H1 (cell line): ENCODE measurements at regions of chr16 and their contacts with region 1.

Region 1: GRCh38 chr16:70380861-70381603 is 34.3 kb downstream of the DDX19A start:
- DNase-seq: peak; percentile 94 to 97
- H3K4me3 ChIP-seq: peak overlapping the region; percentile 75 to 94 (median 86)
- H3K27ac ChIP-seq: peak overlapping the region; percentile 79; the same call in 1 of the 2 replicates
- H3K4me1 ChIP-seq: peaks cover 0 to 3% (median 0%) of the 10 kb centered on the region in 4 experiments; a peak in 2 of 7 replicates
- H3K27me3 ChIP-seq: no peaks in the 10 kb centered on the region
- CTCF ChIP-seq: peak in 2 of 3 experiments; percentile 25 to 32; a peak in 3 of 4 replicates
- EP300 ChIP-seq: no peak
- POLR2A ChIP-seq: peak; percentile 91 to 96
- RAD21 ChIP-seq: peak in 1 of 2 experiments; percentile 20; a peak in 1 of 4 replicates

Region 2: DNA sequence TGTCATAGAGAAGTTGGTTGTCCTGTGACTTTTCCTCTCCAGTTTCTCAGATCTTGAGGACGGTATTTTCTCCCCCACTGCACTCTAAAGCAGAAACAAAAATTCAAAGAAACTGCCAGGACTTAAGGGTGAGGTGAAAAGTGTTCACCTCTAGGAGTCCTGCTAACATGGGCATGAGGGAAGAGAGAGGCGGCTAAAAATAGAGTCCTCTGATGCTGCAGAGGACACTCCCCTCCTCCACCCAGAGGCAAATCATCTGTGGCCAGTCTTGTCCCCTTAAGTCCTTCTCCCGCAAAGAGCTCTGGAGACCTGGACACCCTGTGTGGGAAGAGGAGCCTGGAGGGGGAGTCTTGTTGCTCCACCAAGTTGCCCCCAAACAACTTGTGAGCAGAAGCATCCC is 39.0 kb before region 1 on chr16:
- CTCF ChIA-PET with region 1: no interaction called
- POLR2A ChIA-PET with region 1: interaction called, 12 read pairs
- DNase-seq: no peak
- H3K4me3 ChIP-seq: no peak overlapping the region
- H3K27ac ChIP-seq: no peak overlapping the region; the same call in 1 of the 2 replicates
- H3K4me1 ChIP-seq: no peaks in the 10 kb centered on the region; a peak in 1 of 7 replicates
- H3K27me3 ChIP-seq: no peaks in the 10 kb centered on the region
- CTCF ChIP-seq: no peak
- EP300 ChIP-seq: no peak
- POLR2A ChIP-seq: no peak
- RAD21 ChIP-seq: no peak

Region 3: GRCh38 chr16:70395345-70395901 is 14.4 kb after region 1 on chr16:
- CTCF ChIA-PET with region 1: interaction called, 26 read pairs
- POLR2A ChIA-PET with region 1: interaction called, 37 read pairs
- DNase-seq: peak; percentile 57 to 95
- H3K4me3 ChIP-seq: no peak overlapping the region
- H3K27ac ChIP-seq: no peak overlapping the region
- H3K4me1 ChIP-seq: no peaks in the 10 kb centered on the region
- H3K27me3 ChIP-seq: no peaks in the 10 kb centered on the region
- CTCF ChIP-seq: peak; percentile 92 to 98 (median 93)
- EP300 ChIP-seq: no peak
- POLR2A ChIP-seq: no peak
- RAD21 ChIP-seq: peak; percentile 93

Region 4: DNA sequence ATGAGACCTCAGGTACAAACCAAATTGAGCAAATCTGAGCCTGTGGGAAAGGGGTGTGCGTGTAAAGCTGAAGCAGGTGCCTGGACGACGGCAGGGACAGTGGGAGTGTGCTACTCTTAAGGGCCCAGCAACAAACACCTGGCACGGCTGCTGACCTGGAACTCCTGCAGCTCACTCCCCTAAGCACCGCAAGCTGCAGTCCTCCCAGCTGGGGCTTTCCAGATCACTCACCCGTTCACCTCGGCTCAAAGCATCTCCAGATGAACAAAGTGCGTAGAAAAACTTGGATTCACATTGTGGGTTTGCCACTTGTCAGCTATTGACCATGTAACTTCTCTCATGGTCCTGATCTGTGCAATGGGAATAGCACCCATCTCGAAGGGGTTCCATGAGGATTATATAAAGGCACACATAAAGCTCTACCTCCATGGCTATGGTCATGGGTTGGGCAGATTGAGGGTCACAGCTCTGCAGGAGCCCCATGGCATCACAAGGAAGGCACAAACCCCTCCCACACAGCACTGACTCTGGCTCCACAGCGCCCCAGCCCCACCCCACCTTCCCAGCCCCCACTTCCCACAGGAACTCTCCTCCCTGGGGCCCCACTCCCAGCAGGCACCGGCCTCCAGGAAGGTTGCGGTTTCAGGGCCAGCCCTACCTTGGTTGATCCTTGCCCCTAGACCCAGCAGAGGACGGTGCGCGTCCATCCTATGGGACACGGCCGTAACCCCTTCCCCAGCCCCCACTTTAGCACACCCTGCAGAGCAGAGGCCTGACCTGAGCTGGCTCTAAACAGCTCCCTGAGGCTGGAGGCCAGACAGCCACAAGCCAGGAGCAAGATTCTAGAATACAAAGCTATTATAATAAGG is 36.0 kb after region 1 on chr16:
- CTCF ChIA-PET with region 1: interaction called, 3 read pairs
- POLR2A ChIA-PET with region 1: interaction called, 18 read pairs
- DNase-seq: no peak
- H3K4me3 ChIP-seq: no peak overlapping the region
- H3K27ac ChIP-seq: no peak overlapping the region
- H3K4me1 ChIP-seq: peaks cover 0 to 30% (median 20%) of the 10 kb centered on the region in 4 experiments; a peak in 6 of 7 replicates
- H3K27me3 ChIP-seq: no peaks in the 10 kb centered on the region
- CTCF ChIP-seq: no peak
- EP300 ChIP-seq: no peak
- POLR2A ChIP-seq: no peak
- RAD21 ChIP-seq: no peak

Region 5: GRCh38 chr16:70438969-70439862 is 58.2 kb after region 1 on chr16 and contains the start of gene ST3GAL2:
- CTCF ChIA-PET with region 1: interaction called, 3 read pairs
- POLR2A ChIA-PET with region 1: interaction called, 17 read pairs
- DNase-seq: peak; percentile 87 to 95
- H3K4me3 ChIP-seq: peak within 1 kb of the TSS; percentile 76 to 92 (median 80)
- H3K27ac ChIP-seq: peak within 1 kb of the TSS; percentile 56; the same call in 1 of the 2 replicates
- H3K4me1 ChIP-seq: peaks cover 5 to 23% (median 15%) of the 10 kb centered on the region in 4 experiments
- H3K27me3 ChIP-seq: no peaks in the 10 kb centered on the region
- CTCF ChIP-seq: no peak
- EP300 ChIP-seq: peak in 1 of 2 experiments; percentile 53; a peak in 1 of 3 replicates
- POLR2A ChIP-seq: peak; percentile 60 to 87
- RAD21 ChIP-seq: no peak
- total RNA-seq, gene ST3GAL2: 39.3 and 39.7 TPM in 2 replicates

Region 6: DNA sequence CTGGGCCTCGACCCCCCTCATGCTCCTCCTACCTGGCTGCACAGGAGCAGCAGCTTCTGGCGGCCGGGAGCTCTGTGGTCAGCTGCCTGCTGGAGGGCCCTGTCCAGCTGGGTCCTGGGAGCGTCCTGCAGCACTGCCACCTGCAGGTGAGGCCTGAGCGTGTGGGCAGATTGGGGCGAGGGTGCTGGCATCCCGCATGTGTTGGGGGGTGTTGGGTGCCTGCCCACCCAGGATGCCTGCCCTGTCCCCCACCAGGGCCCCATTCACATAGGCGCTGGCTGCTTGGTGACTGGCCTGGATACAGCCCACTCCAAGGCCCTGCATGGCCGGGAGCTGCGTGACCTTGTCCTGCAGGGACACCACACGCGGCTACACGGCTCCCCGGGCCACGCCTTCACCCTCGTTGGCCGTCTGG is 89.9 kb after region 1 on chr16:
- CTCF ChIA-PET with region 1: interaction called, 117 read pairs
- POLR2A ChIA-PET with region 1: interaction called, 36 read pairs
- DNase-seq: peak in 1 of 2 experiments; percentile 74
- H3K4me3 ChIP-seq: no peak overlapping the region
- H3K27ac ChIP-seq: no peak overlapping the region
- H3K4me1 ChIP-seq: no peaks in the 10 kb centered on the region; a peak in 1 of 7 replicates
- H3K27me3 ChIP-seq: no peaks in the 10 kb centered on the region
- CTCF ChIP-seq: peak; percentile 80 to 91 (median 84)
- EP300 ChIP-seq: no peak
- POLR2A ChIP-seq: no peak
- RAD21 ChIP-seq: peak; percentile 69 to 80